ENCODE measurements at regions of chr3 and their contacts with region 1.

Region 1: DNA sequence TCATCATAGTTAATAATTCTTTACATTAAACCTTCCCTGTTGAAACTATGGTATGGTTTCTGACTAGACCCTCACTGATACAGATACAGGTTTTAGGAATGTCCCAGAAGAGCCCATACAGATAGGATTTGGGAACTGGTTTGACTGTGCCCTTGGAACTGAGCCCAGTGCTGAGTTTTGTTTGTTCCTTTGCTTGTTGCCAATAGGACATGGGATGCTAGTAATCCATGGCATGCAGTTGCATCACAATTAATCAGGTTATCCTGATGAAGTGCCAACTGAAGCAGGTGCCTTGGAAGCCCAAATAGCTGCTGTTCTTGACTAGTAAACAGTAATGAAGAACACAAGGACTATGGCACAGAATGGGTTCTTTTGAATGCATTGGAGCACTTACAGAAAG is 230.6 kb downstream of the NEK10 start:
- DNase-seq: no peak
- H3K4me3 ChIP-seq: no peak overlapping the region
- H3K4me3 Mint-ChIP-seq: no peak overlapping the region
- H3K27ac ChIP-seq: no peak overlapping the region
- H3K27ac Mint-ChIP-seq: no peak overlapping the region
- H3K4me1 ChIP-seq: no peaks in the 10 kb centered on the region
- H3K4me1 Mint-ChIP-seq: no peaks in the 10 kb centered on the region
- H3K27me3 ChIP-seq: no peaks in the 10 kb centered on the region
- H3K27me3 Mint-ChIP-seq: peaks cover 3 to 5% (median 4%) of the 10 kb centered on the region in 3 donors
- CTCF ChIP-seq: no peak

Region 2: DNA sequence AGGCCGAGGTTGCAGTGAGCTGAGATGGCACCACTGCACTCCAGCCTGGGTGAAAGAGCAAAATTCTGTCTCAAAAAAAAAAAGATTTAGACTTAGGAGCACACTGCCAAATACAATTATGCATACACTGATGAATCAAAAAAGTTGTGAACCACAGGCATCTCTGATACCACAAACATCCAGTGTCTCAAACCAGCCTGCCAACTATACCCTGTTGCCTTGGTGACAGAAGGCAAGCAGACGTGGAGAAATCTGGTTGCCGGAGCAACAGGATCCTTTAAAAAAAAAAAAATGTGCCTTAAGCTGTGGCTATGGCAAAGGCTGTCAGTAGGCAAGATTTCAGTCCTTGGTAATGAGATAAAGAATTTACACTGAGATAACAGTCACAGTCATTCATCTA is 28.3 kb after region 1 on chr3:
- intact Hi-C with region 1: no loop called
- DNase-seq: no peak
- H3K4me3 ChIP-seq: no peak overlapping the region
- H3K4me3 Mint-ChIP-seq: no peak overlapping the region
- H3K27ac ChIP-seq: no peak overlapping the region
- H3K27ac Mint-ChIP-seq: no peak overlapping the region
- H3K4me1 ChIP-seq: peaks cover 0 to 11% of the 10 kb centered on the region in 2 donors
- H3K4me1 Mint-ChIP-seq: peaks cover 8% of the 10 kb centered on the region
- H3K27me3 ChIP-seq: no peaks in the 10 kb centered on the region
- H3K27me3 Mint-ChIP-seq: peaks cover 0 to 1% (median 0%) of the 10 kb centered on the region in 3 donors
- CTCF ChIP-seq: no peak

Region 3: DNA sequence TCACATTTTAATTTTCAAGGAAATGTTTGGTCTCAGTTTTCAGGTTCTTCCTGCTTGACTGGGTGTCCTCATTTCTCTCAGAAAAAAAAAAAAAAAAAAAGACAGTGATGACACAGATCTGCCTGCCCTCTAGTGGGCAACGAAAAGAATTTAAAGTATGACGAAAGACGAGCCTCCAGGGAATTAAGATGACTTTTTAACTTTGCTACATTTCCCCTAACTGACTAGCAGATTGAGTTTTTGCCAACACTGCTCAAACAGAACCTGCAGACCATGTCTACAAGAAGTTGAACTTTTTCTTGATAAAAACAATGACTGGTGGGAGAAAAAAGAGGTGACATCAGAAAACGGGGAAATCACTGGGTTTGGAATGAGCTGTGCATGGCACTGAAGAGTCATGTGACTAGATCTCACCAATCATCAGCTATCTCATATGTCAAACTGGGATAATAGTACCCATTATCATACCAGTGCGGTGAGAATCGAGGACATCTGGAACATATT is 542.7 kb after region 1 on chr3:
- intact Hi-C with region 1: loop called in 1 of 2 experiments (anchors 5 kb)
- DNase-seq: peak; percentile 60 to 74 (median 72)
- H3K4me3 ChIP-seq: peak overlapping the region in 2 of 3 experiments; percentile 21 to 31
- H3K4me3 Mint-ChIP-seq: peak overlapping the region; percentile 50 to 89
- H3K27ac ChIP-seq: no peak overlapping the region
- H3K27ac Mint-ChIP-seq: peak overlapping the region in 4 of 7 donors; percentile 57 to 79 (median 68)
- H3K4me1 ChIP-seq: peaks cover 0 to 10% of the 10 kb centered on the region in 2 donors
- H3K4me1 Mint-ChIP-seq: peaks cover 9% of the 10 kb centered on the region
- H3K27me3 ChIP-seq: no peaks in the 10 kb centered on the region
- H3K27me3 Mint-ChIP-seq: peaks cover 1 to 8% (median 2%) of the 10 kb centered on the region in 3 donors
- CTCF ChIP-seq: peak; percentile 89

Measured in CD14-positive monocyte (primary cell).